Activated T-helper 2 cell treated with anti-CD3 and anti-CD28 coated beads, Interferon-gamma antibody, Interleukin-2, Interleukin-4, amounts not matched to agents 10 μg/mL and 5 μg/mL and 100 μg/mL, durations not matched to agents 14 hours and 24 hours and 36 hours (primary cell): ENCODE measurements at regions of chr4 and their contacts with region 1.

Region 1: GRCh38 chr4:83012687-83013419 is 2.2 kb upstream of the LIN54 start:
- DNase-seq: peak; percentile 96
- H3K4me3 Mint-ChIP-seq: peak overlapping the region; percentile 94
- H3K27ac Mint-ChIP-seq: peak overlapping the region; percentile 93
- H3K4me1 Mint-ChIP-seq: peaks cover 36% of the 10 kb centered on the region
- H3K27me3 Mint-ChIP-seq: no peaks in the 10 kb centered on the region

Region 2: DNA sequence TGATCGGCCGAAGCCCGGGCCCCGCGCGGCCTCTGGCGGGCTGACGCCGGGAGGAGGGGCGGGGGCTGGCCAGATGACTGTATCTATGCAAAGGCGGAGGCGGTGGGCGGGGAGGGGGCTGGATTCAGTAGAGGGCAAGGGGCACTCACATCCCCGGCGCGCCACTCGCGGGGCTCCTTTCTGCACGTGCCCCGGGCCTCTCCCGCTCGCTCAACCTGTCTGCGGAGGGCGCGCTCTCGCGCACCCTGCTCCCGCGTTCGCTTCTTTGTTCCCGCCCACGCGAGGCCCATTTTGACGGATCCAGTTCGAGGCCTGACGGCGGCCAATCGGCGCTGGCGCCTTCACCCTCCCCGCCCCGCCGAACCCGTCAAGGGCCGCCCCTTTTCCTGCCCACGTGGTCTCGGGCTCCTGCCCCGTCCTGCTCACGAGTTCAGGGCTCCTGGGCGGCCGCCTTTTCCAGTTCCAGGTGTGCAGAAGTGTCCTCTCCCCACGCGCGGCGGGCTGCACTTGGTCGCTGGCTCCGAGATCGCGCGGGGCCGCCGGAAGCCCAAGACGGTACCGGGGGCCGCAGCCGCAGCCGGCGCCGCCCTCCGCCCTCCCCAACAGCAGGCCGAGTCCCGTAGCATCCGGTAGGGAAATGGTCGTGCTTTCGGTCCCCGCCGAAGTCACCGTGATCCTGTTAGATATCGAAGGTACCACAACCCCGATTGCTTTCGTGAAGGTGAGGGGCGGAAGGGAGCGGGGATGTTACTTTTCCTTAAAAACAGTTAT is 582.5 kb before region 1 on chr4 and contains the starts of genes ENOPH1 and HNRNPDL:
- intact Hi-C with region 1: loop called (anchors 5 kb)
- DNase-seq: peak; percentile 96
- H3K4me3 Mint-ChIP-seq: peak within 1 kb of the TSS; percentile 98
- H3K27ac Mint-ChIP-seq: peak within 1 kb of the TSS; percentile 99
- H3K4me1 Mint-ChIP-seq: peaks cover 44% of the 10 kb centered on the region
- H3K27me3 Mint-ChIP-seq: no peaks in the 10 kb centered on the region
- total RNA-seq, gene ENOPH1: 64.5 and 65.9 TPM in 2 replicates
- total RNA-seq, gene HNRNPDL: 470 and 486 TPM in 2 replicates

Region 3: DNA sequence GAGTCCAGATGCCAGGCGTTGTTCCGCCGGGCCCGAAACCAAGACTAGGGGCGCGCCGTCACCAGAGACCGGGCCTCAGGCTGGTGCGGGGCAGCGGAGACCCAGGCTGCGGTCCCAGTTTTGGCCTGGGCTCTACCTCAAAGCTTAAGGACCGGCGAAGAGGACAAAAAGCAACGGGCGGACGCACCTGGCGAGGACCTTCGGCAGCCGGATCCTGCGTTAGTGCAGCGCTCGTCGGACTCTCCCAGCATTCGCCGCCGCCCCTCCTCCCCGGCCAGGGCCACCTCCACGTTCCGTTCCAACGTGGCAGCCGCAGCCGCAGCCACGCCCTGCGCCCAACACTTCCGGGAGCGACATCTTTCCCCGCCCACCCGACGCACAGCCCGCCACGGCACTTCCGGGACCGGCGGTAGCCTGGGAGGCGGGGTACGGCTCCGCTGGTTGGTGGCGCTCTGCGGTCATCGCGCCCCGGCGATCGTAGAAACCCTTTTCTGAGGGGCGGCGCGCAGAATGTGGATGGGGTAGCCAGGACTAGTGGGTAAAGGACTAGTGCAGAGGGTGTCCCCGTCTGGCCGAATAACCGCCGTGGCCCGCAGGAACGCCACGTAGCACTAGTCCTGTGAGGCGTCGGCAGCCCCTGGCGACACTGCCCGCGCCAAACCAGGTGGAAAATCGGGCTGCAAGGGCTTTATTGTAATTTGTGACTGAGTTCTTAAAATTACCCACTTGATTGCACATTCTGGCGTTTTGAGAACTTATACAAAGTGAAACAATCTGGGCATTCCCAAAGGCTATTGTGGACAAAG is 121.7 kb before region 1 on chr4 and contains the start of gene SEC31A:
- intact Hi-C with region 1: loop called (anchors 2 kb)
- DNase-seq: peak; percentile 96
- H3K4me3 Mint-ChIP-seq: peak within 1 kb of the TSS; percentile 89
- H3K27ac Mint-ChIP-seq: peak within 1 kb of the TSS; percentile 91
- H3K4me1 Mint-ChIP-seq: peaks cover 43% of the 10 kb centered on the region
- H3K27me3 Mint-ChIP-seq: no peaks in the 10 kb centered on the region
- total RNA-seq, gene SEC31A: 138 and 142 TPM in 2 replicates

Region 4: GRCh38 chr4:82989575-82990429 is 23.1 kb before region 1 on chr4:
- intact Hi-C with region 1: loop called (anchors 2 kb)
- DNase-seq: no peak
- H3K4me3 Mint-ChIP-seq: peak overlapping the region; percentile 60
- H3K27ac Mint-ChIP-seq: peak overlapping the region; percentile 54
- H3K4me1 Mint-ChIP-seq: peaks cover 22% of the 10 kb centered on the region
- H3K27me3 Mint-ChIP-seq: no peaks in the 10 kb centered on the region

Region 5: DNA sequence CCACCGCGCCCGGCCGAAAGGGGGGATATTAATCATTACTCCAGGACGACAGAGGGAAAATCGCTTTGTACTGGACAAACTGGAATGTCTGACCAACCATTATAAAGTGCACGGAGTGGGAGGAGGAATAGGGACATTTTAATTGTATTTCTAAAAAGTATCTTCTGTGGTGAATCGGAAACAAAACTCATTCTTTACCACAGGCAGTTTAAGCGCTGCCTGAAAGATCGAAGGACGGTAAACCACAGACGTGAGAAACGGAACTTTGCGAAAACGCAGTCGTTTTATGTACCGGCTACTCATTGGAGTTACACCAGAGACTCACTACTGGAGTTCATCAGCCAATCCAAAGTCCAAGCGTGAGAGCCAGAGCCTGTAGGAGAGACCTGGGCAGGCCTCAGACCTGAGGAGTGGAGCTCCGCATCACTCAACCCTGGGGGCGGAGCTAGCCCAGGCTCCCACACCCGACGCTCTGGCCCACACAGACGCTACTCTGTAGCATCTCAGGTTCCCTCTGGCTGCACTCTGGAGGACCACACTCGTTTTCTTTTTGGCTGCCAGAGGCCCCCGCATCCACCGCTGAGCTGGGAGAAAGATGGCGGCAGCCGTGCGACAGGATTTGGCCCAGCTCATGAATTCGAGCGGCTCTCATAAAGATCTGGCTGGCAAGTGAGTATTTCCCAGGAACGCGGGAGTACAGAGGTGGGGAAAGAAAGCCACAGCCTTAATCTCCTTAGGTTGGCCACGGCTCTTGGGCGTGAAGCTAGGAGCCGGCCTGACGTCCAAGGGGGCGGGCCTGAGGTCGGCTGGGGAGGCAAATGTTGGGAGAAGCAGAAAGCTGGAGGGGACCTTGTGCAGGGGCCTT is 22.0 kb after region 1 on chr4 and contains the start of gene COPS4:
- intact Hi-C with region 1: loop called (anchors 1 kb)
- DNase-seq: peak; percentile 96
- H3K4me3 Mint-ChIP-seq: peak within 1 kb of the TSS; percentile 98
- H3K27ac Mint-ChIP-seq: peak within 1 kb of the TSS; percentile 100
- H3K4me1 Mint-ChIP-seq: peaks cover 18% of the 10 kb centered on the region
- H3K27me3 Mint-ChIP-seq: peaks cover 4% of the 10 kb centered on the region
- total RNA-seq, gene COPS4: 33.7 and 35.2 TPM in 2 replicates

Region 6: GRCh38 chr4:83074086-83074704 is 61.3 kb after region 1 on chr4:
- intact Hi-C with region 1: loop called (anchors 2 kb)
- DNase-seq: peak; percentile 62
- H3K4me3 Mint-ChIP-seq: no peak overlapping the region
- H3K27ac Mint-ChIP-seq: no peak overlapping the region
- H3K4me1 Mint-ChIP-seq: peaks cover 26% of the 10 kb centered on the region
- H3K27me3 Mint-ChIP-seq: no peaks in the 10 kb centered on the region